Head of caudate nucleus (tissue), 42 donors: ENCODE measurements at regions of chr6 and their contacts with region 1.

Region 1: DNA sequence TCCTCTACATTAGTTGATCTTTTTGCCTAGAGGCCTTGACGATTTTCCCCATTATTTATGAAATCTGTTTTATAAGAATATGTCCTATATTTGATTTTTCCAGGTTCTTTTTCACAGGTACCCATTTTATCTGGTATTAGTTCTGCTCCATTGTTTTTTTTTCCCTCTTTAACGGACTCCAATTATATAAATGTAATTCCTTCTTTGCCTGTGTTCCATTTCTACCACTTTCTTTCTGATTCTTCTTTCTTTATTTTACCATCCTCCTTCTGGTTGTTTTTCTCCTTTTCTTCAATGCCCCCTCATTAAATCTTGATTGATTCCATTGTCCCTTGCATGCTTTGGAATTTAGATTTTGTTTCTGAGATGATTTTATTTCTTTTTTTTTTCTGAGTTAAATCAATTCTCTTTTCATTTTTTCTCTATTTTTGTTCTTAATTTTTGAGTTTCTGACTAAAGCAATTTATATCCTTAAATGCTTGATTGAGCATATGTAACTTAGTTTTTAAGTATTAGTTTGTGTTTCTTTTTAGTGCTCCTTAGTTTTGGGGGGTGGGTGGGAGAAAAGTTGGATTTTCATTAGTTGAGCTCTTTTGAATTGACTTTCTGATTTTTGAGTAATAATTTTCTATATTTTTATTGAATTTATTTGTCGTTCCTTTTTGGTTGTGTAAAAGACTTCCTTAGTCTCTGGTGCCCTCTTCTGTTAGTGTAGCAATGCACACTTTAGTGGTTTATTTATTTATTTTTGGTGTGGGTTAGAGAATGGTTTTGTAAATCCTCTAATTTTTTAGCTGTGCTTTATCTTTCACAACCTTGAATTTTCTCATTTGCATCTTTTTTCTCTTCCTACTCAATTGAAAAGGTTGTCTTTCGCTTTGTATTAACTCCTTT is 140.8 kb downstream of the FARS2 start:
- DNase-seq: no peak

Region 2: GRCh38 chr6:5143634-5144311 is 258.3 kb before region 1 on chr6:
- intact Hi-C with region 1: loop called (anchors 5 kb)
- DNase-seq: peak; percentile 78 to 97 (median 93)